OCI-LY7 (cell line): ENCODE measurements at regions of chr1 and their contacts with region 1.

Region 1: GRCh38 chr1:160284782-160285344 is at the start of gene PEX19:
- DNase-seq: peak; percentile 91
- H3K4me3 ChIP-seq: peak within 1 kb of the TSS; percentile 77
- H3K27ac ChIP-seq: peak within 1 kb of the TSS; percentile 25
- H3K4me1 ChIP-seq: peaks cover 9% of the 10 kb centered on the region
- CTCF ChIP-seq: no peak
- total RNA-seq, gene PEX19: 32.6 and 34.7 TPM in 2 replicates

Region 2: DNA sequence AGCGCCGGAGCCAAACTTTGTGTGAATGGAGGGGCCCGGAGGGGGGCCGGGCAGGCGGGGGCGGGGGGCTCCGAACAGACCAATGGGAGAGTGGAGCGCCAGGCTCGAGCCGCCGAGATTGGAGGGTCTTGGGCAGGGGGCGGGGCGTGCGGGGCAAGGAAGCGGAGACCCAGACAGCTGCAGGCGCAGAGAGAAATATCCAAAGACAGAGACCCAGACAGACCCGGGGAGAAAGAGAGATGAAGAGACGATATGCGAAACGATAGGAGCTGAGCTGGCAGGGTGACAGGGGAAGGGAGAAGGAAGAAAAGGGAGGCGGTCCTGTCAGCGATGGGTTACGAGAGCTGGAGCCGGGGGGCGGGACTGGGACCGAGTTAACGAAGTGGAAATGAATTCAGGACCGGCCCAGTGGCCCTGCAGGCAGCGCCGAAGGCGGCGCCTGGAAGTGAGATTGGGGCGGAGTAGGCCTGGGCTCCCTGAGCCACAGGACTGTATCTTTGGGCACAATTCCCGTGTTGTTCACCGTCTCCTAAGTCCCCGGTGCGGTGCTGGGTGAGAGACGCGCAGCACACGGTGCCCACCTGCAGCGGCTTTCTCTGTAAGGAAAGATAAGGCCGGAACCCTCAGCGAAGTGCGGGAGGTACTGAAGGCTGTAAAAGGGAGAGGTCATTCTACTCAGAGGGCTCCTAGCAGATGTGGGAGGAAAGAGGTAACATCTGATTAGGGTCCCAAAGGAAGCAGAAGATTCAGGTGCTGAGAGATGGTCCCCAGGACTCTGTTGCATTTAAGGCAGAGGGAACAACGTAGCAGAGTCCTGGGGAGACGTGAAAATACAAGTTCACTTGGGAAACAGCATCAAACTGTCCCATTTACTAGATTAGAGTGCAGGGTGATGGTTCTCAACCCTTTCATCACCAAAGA is 214.4 kb before region 1 on chr1:
- CTCF ChIA-PET with region 1: no interaction called
- POLR2A ChIA-PET with region 1: no interaction called
- intact Hi-C with region 1: no loop called
- DNase-seq: peak; percentile 84
- H3K4me3 ChIP-seq: peak overlapping the region; percentile 70
- H3K27ac ChIP-seq: no peak overlapping the region
- H3K4me1 ChIP-seq: peaks cover 17% of the 10 kb centered on the region
- CTCF ChIP-seq: no peak

Region 3: GRCh38 chr1:160307118-160307854 is 22.4 kb after region 1 on chr1:
- CTCF ChIA-PET with region 1: no interaction called
- POLR2A ChIA-PET with region 1: no interaction called
- intact Hi-C with region 1: no loop called
- DNase-seq: peak; percentile 75
- H3K4me3 ChIP-seq: no peak overlapping the region
- H3K27ac ChIP-seq: peak overlapping the region; percentile 17
- H3K4me1 ChIP-seq: peaks cover 17% of the 10 kb centered on the region
- CTCF ChIP-seq: no peak

Region 4: DNA sequence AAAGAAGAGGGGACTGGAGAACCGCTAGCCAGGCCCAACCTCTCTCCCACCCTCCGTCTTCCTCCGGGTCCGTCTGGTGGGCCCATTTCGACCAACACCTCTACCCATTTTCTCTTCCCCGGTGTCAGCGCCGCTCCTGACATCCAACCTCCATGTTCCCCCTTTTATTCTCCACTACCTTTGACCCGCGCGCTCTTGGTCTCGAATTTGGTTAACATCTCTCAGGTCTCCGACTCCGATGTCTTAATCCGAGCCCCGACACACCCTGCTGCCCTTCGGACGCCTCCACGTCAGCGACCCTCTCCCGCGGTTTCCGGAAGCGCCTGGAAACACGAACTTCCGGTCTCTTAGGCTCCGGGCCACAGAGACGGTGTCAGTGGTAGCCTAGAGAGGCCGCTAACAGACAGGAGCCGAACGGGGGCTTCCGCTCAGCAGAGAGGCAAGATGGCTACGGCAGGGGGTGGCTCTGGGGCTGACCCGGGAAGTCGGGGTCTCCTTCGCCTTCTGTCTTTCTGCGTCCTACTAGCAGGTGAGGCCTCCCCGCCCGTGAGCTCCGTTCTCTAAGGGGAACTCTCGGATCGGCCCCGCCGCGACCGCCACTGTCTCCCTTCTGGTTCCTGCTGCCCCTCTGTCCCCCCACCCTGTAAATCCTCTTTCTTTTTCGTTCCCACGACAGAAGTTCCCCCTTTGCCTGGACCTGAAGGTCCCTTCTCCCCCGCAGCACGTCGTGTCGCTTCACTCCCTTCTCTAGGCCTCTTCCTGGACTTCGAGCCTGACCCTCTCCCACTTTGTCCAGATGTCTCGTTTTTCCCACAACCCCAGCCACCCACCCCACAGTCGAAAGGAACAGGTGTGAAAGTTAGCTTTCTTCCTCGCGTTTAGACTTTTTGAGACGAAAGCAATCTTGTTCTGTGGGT is 58.3 kb after region 1 on chr1 and contains the starts of genes COPA and NCSTN:
- CTCF ChIA-PET with region 1: no interaction called
- POLR2A ChIA-PET with region 1: interaction called, 4 read pairs
- intact Hi-C with region 1: loop called (anchors 2 kb)
- DNase-seq: peak; percentile 97
- H3K4me3 ChIP-seq: peak within 1 kb of the TSS; percentile 87
- H3K27ac ChIP-seq: peak within 1 kb of the TSS; percentile 60
- H3K4me1 ChIP-seq: peaks cover 44% of the 10 kb centered on the region
- CTCF ChIP-seq: no peak
- total RNA-seq, gene COPA: 74.2 and 93.0 TPM in 2 replicates
- total RNA-seq, gene NCSTN: 32.0 and 44.8 TPM in 2 replicates

Region 5: GRCh38 chr1:160400223-160400645 is 115.4 kb after region 1 on chr1 and contains the start of gene VANGL2:
- CTCF ChIA-PET with region 1: no interaction called
- POLR2A ChIA-PET with region 1: no interaction called
- intact Hi-C with region 1: no loop called
- DNase-seq: peak; percentile 65
- H3K4me3 ChIP-seq: peak within 1 kb of the TSS; percentile 70
- H3K27ac ChIP-seq: no peak within 1 kb of the TSS
- H3K4me1 ChIP-seq: peaks cover 16% of the 10 kb centered on the region
- CTCF ChIP-seq: no peak
- total RNA-seq, gene VANGL2: 1.5 and 2.6 TPM in 2 replicates